CD4-positive, alpha-beta memory T cell (primary cell): ENCODE measurements at regions of chr14 and their contacts with region 1.

Region 1: GRCh38 chr14:67619446-67620216 is at the start of gene ARG2:
- DNase-seq: peak; percentile 95 to 96 (median 95)
- H3K4me3 ChIP-seq: peak within 1 kb of the TSS; percentile 52 to 54
- H3K4me3 Mint-ChIP-seq: peak within 1 kb of the TSS; percentile 87 to 92 (median 89)
- H3K27ac ChIP-seq: peak within 1 kb of the TSS; percentile 75
- H3K27ac Mint-ChIP-seq: peak within 1 kb of the TSS; percentile 88 to 98 (median 97)
- H3K4me1 ChIP-seq: peaks cover 15% of the 10 kb centered on the region
- H3K4me1 Mint-ChIP-seq: peaks cover 7 to 25% (median 21%) of the 10 kb centered on the region in 4 donors
- H3K27me3 ChIP-seq: peaks cover 4% of the 10 kb centered on the region
- H3K27me3 Mint-ChIP-seq: peaks cover 2 to 7% of the 10 kb centered on the region in 2 donors
- total RNA-seq, gene ARG2: 0.55 TPM in 1 of 2 experiments, not detected in the other

Region 2: DNA sequence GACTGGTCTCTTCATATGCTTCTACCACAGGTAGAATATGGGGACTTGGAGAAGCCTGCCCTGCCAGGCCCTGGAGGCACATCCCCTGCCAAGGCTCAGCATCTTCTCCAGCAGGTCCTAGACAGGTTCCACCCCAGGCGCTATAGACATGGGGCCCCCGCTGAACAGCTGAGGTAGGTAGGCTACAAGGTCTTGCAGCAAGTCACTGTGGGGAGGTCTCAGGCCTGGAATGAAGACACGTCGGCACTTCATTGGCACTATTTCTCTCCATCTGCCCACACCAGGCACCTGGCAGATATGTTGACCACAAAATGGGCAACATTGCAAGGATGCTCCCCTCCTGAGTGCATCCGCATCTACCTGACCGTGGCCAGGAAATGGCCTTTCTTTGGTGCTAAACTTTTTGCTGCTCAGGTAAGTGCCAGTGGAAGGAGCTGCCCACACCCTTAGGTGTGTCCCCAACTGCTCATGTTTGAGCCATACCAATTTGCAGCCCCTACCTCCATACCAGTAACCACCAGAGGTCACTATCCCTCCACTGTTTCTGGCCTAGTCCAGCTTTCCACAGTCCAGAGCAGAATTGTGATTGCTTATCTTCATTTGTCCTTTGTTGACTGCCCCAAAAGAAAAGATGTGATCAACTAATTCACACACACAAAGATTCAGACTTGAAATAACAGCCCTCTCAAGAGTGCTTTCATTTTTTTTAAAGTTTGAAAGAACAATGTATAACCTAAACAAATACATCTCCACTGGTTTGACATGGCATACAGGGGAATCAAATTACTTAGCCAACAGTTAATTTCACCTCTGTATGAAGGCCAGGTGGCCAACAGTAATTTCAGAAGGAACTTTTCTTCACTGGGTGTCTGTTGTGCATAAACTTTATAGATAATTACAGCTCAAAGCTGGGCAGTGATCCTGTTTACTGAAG is 35.7 kb before region 1 on chr14:
- CTCF ChIA-PET with region 1: interaction called, 5 read pairs
- POLR2A ChIA-PET with region 1: no interaction called
- intact Hi-C with region 1: loop called (anchors 1 kb)
- DNase-seq: peak in 4 of 5 donors; percentile 14 to 34 (median 30)
- H3K4me3 ChIP-seq: no peak overlapping the region
- H3K4me3 Mint-ChIP-seq: no peak overlapping the region
- H3K27ac ChIP-seq: no peak overlapping the region
- H3K27ac Mint-ChIP-seq: no peak overlapping the region
- H3K4me1 ChIP-seq: no peaks in the 10 kb centered on the region
- H3K4me1 Mint-ChIP-seq: no peaks in the 10 kb centered on the region
- H3K27me3 ChIP-seq: no peaks in the 10 kb centered on the region
- H3K27me3 Mint-ChIP-seq: no peaks in the 10 kb centered on the region

Region 3: DNA sequence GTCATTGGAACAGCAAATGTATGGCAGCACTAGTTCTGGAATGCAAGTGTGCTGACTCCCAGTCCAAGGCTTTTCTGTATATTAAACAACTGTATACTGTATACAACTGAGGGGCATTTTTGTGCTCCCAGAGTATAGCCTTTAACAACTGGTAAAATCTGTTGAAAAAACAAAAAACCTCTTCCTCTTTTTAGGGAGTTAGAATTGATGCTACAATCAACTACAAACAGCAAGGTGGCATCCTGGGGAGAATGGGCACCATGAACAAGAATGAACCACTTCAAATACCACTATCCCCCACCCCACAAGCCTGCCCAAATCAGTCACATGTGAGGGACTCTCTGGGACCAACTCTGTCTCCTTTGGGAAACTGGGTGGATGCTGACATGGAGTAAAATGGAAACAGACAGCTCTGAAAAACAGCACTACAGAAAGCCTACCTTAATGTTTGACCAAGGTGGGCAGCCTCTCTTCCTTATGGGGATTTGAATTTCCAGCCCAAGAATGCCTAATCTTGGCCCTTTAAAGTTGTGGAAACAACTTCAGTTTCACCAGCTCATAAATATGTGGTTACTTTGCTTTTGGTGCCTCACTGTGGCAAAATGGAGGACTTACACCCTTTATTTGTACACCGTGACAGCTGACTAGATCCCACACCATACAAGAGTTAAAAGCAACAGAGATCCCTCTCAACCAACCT is 47.3 kb after region 1 on chr14:
- CTCF ChIA-PET with region 1: interaction called, 16 read pairs
- POLR2A ChIA-PET with region 1: interaction called, 3 read pairs
- intact Hi-C with region 1: loop called (anchors 1 kb)
- DNase-seq: peak; percentile 42 to 45 (median 45)
- H3K4me3 ChIP-seq: no peak overlapping the region
- H3K4me3 Mint-ChIP-seq: no peak overlapping the region
- H3K27ac ChIP-seq: no peak overlapping the region
- H3K27ac Mint-ChIP-seq: peak overlapping the region; percentile 6 to 75 (median 61)
- H3K4me1 ChIP-seq: peaks cover 43% of the 10 kb centered on the region
- H3K4me1 Mint-ChIP-seq: peaks cover 32 to 66% (median 51%) of the 10 kb centered on the region in 4 donors
- H3K27me3 ChIP-seq: no peaks in the 10 kb centered on the region
- H3K27me3 Mint-ChIP-seq: no peaks in the 10 kb centered on the region

Region 4: DNA sequence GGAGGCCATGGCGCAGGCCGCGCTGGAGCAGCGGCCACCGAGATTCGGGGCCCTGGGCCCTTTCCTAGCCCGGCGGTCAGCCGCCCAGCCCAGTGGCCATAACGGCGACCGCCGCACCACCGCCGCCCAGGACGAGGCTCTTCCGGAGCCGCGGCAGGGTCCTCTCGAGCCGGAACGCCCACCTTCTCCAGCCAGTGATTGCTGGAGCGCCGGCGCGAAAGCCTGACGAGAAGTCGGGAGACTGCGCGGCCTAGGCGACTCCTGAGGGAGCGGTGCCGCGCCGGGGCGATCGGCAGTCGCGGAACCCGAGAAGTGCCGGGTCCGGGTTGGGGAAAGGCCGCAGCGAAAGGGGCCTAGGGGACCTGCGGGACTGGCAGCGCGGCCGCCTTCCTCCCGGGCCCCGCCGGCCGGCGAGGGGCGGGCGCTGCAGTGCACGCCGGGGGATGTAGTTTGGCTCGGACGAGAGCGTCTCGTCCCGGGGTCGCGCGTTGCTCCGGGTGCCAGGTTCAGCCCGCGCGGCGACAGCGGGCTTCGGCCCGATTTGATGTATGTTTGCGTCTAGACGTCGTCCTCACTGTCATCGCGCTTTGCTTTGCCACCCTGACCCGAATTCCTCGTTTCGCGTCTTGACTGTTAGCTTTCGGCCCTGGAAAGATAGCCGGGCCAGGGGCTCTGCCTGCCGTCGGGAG is 55.0 kb after region 1 on chr14 and contains the start of gene VTI1B:
- CTCF ChIA-PET with region 1: interaction called, 10 read pairs
- POLR2A ChIA-PET with region 1: interaction called, 5 read pairs
- intact Hi-C with region 1: loop called (anchors 2 kb)
- DNase-seq: peak; percentile 78 to 85 (median 81)
- H3K4me3 ChIP-seq: peak within 1 kb of the TSS; percentile 66 to 96
- H3K4me3 Mint-ChIP-seq: peak within 1 kb of the TSS; percentile 86 to 94 (median 91)
- H3K27ac ChIP-seq: peak within 1 kb of the TSS; percentile 87
- H3K27ac Mint-ChIP-seq: peak within 1 kb of the TSS; percentile 72 to 95 (median 92)
- H3K4me1 ChIP-seq: peaks cover 48% of the 10 kb centered on the region
- H3K4me1 Mint-ChIP-seq: peaks cover 23 to 54% (median 39%) of the 10 kb centered on the region in 4 donors
- H3K27me3 ChIP-seq: no peaks in the 10 kb centered on the region
- H3K27me3 Mint-ChIP-seq: no peaks in the 10 kb centered on the region
- total RNA-seq, gene VTI1B: 71.1 to 72.6 TPM

Region 5: DNA sequence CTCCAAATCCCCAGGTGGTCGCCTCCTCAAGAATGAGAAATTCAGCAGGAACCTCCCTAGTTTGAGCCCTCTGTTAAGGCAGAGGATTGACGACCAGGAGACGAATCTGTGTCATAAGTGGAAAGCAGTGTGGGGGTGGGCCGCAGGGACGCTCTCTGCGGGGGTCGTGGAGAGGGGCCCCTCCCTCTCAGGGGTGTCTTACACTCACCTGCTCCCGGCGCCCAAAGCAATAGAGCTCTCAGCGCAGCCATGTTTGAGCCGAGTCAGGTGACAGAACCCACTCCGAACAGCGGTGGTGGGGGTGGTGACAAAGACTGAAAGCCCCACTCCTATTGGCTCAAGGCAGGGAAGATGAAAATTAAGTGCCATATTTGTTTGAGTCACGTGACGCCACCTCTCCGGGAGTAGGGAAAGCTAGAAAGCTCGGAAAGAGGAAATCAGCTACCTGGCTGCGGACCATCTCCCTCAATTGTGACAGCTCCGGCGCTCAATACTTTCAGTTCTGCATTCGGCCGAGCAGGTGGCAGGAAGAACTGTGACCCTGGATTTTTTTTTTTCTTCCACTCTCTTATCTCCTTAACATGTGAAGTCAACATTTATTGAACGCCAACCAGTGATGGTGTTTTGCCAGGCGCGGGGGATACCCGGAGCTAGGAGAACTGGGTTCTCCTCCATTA is 196.8 kb after region 1 on chr14 and contains the start of gene ZFYVE26:
- CTCF ChIA-PET with region 1: no interaction called
- POLR2A ChIA-PET with region 1: no interaction called
- intact Hi-C with region 1: loop called (anchors 1 kb)
- DNase-seq: peak; percentile 87 to 95 (median 88)
- H3K4me3 ChIP-seq: peak within 1 kb of the TSS; percentile 54 to 86
- H3K4me3 Mint-ChIP-seq: peak within 1 kb of the TSS; percentile 89 to 99 (median 96)
- H3K27ac ChIP-seq: peak within 1 kb of the TSS; percentile 47
- H3K27ac Mint-ChIP-seq: peak within 1 kb of the TSS; percentile 86 to 98 (median 96)
- H3K4me1 ChIP-seq: peaks cover 38% of the 10 kb centered on the region
- H3K4me1 Mint-ChIP-seq: peaks cover 39 to 61% (median 46%) of the 10 kb centered on the region in 4 donors
- H3K27me3 ChIP-seq: no peaks in the 10 kb centered on the region
- H3K27me3 Mint-ChIP-seq: no peaks in the 10 kb centered on the region
- total RNA-seq, gene ZFYVE26: 35.2 to 38.1 TPM